Heart left ventricle (tissue), 16 donors: ENCODE measurements at regions of chr22 and their contacts with region 1.

Region 1: GRCh38 chr22:37676736-37677492 is 1.5 kb downstream of the LGALS1 start:
- DNase-seq: peak; percentile 88 to 91 (median 90)
- ATAC-seq: peak in 3 of 4 donors; percentile 48 to 59 (median 48)
- H3K4me3 ChIP-seq: peak overlapping the region; percentile 52 to 92 (median 71)
- H3K27ac ChIP-seq: peak overlapping the region; percentile 74 to 99 (median 96)
- H3K4me1 ChIP-seq: peaks cover 3 to 68% (median 39%) of the 10 kb centered on the region in 12 donors
- H3K27me3 ChIP-seq: no peaks in the 10 kb centered on the region
- CTCF ChIP-seq: no peak
- POLR2A ChIP-seq: no peak

Region 2: GRCh38 chr22:37608477-37609239 is 68.3 kb before region 1 on chr22 and contains the start of gene GGA1:
- intact Hi-C with region 1: loop called in 1 of 10 experiments (anchors 2 kb)
- DNase-seq: peak; percentile 96 to 98 (median 97)
- ATAC-seq: peak; percentile 91 to 95 (median 92)
- H3K4me3 ChIP-seq: peak within 1 kb of the TSS; percentile 62 to 99 (median 82)
- H3K27ac ChIP-seq: peak within 1 kb of the TSS; percentile 88 to 98 (median 94)
- H3K4me1 ChIP-seq: peaks cover 0 to 50% (median 32%) of the 10 kb centered on the region in 12 donors
- H3K27me3 ChIP-seq: no peaks in the 10 kb centered on the region
- CTCF ChIP-seq: peak in 1 of 12 donors; percentile 16
- POLR2A ChIP-seq: peak in 1 of 2 donors; percentile 32
- total RNA-seq, gene GGA1: 22.7 to 45.7 (median 27.4) TPM

Region 3: GRCh38 chr22:37623075-37624016 is 53.6 kb before region 1 on chr22:
- intact Hi-C with region 1: loop called in 5 of 10 experiments (anchors 1 to 5 kb)
- DNase-seq: peak in 4 of 5 donors; percentile 61 to 84 (median 68)
- ATAC-seq: peak; percentile 49 to 69 (median 64)
- H3K4me3 ChIP-seq: no peak overlapping the region
- H3K27ac ChIP-seq: peak overlapping the region in 2 of 12 donors; percentile 47 to 90
- H3K4me1 ChIP-seq: peaks cover 0 to 40% (median 25%) of the 10 kb centered on the region in 12 donors
- H3K27me3 ChIP-seq: no peaks in the 10 kb centered on the region
- CTCF ChIP-seq: peak; percentile 75 to 91 (median 84)
- POLR2A ChIP-seq: no peak

Region 4: DNA sequence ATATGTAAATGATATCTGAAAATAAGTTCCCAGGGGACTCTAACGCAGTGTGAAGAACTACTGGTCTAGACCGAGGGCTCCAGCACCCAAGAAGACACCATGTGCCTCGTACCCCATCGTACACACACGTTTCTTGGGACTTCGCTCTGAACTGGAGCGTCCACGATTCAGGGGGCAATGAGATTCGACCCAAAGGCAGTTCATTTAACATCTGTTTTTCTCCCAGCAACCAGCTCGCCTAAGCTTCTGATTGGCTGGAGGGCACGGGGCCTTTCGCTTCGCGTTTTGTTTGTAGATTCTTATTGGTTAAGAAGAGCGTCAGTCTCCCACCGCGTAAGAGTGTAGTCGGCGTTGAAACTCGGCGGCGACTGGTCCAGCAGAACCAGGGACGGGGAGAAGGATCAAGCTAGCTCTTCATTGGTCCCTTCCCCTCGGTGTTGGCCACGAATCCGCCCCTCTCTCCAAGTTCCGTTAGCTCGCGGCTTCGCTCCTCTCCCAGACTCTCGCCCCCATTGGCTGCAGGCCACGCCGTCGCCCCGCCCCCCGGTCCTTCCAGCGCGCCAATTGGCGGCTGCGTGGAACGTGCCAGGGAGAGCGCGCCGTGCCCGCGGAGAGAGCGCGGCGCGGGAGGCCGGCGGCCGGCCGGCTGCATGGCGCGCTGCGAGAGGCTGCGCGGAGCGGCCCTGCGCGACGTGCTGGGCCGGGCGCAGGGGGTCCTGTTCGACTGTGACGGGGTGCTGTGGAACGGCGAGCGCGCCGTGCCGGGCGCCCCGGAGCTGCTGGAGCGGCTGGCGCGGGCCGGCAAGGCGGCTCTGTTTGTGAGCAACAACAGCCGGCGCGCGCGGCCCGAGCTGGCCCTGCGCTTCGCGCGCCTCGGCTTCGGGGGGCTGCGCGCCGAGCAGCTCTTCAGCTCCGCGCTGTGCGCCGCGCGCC is 18.5 kb before region 1 on chr22 and contains the start of gene PDXP:
- intact Hi-C with region 1: loop called in 6 of 10 experiments (anchors 1 to 2 kb)
- DNase-seq: peak; percentile 99 to 100 (median 99)
- ATAC-seq: peak; percentile 97 to 99 (median 98)
- H3K4me3 ChIP-seq: peak within 1 kb of the TSS; percentile 40 to 86 (median 64)
- H3K27ac ChIP-seq: peak within 1 kb of the TSS in 11 of 12 donors; percentile 72 to 91 (median 84)
- H3K4me1 ChIP-seq: peaks cover 0 to 54% (median 39%) of the 10 kb centered on the region in 12 donors
- H3K27me3 ChIP-seq: no peaks in the 10 kb centered on the region
- CTCF ChIP-seq: no peak
- POLR2A ChIP-seq: peak in 1 of 2 donors; percentile 80
- total RNA-seq, gene PDXP: 15.2 to 33.1 (median 25.9) TPM

Region 5: DNA sequence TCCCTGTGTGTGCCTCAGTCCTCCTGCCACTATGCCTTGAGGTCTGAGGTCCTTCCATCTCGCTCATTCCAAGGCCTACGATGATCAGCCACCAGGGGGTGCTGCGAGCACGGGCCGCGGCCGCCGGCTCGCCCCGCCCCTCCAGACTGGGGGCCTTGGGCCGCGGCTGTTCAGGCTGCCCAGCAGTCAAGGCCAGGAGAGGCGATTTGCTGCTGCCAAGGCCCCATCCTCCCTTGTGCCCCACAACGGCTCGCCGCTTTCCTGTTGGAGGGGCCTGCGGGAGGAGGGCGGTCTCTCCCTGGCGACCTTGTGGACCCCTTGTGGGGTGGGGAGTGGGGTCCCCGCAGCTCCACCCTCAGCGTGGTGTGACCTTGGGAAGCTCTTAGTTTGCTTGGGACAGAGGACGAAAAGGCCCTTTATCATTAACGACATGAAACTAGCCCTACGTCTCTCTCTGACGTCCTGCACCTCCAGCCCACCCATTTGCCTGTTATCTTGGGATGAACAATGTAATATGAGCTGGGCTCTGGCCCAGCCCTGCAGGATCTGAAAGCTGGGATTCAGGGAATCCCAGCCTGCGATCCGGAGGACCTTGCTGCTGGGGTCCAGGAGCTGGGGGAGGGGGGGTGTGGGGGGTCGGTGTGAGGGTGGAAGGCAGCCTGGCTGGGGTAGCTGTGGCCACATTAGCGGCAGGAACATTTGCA is 140.9 kb after region 1 on chr22:
- intact Hi-C with region 1: no loop called
- DNase-seq: peak; percentile 80 to 91 (median 86)
- ATAC-seq: peak; percentile 89 to 94 (median 92)
- H3K4me3 ChIP-seq: peak overlapping the region in 10 of 12 donors; percentile 23 to 62 (median 49)
- H3K27ac ChIP-seq: peak overlapping the region in 10 of 12 donors; percentile 13 to 84 (median 64)
- H3K4me1 ChIP-seq: peaks cover 2 to 20% (median 18%) of the 10 kb centered on the region in 12 donors
- H3K27me3 ChIP-seq: peaks cover 0 to 18% (median 5%) of the 10 kb centered on the region in 9 donors
- CTCF ChIP-seq: peak; percentile 92 to 99 (median 97)
- POLR2A ChIP-seq: no peak